ENCODE measurements at regions of chr1 and their contacts with region 1.

Region 1: DNA sequence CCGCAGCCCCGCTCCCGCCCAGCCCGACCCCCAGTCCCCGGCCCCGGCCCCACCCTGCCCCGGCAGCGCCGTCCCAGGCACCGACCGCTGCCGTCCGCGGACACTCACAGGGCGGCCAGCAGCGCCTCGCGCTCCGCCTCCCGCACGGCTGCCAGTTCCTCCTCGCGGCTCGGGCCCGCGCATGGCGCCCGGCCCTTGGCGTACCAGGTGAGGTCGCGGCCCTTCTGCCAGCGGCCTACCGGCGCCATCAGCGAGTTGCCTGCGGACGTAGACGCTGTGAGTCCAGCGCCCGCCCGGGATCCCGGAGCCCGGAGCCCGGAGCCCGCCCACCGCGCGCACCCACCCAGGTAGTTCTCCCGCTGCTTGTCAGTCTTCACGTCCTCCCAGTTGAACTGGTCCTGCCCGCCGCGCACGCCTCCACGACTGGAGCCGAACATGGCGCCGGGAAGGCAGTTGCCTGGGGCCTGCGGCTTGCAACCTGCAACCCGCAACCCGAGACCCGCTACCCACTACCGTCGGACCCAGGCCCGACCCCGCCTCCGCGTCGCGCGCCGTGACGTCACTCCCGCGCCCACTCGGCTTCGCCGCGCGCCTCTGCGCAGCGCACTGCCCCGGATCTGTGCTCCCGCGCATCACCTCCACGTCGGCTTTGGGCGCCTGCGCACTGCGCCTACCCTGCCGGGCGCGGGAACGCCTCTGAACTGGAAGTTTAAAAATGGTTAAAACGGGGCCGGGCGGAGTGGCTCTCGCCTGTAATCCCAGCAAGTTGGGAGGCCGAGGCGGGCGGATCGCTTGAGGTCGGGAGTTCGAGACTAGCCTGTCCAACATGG is at the start of gene C1orf35:
- DNase-seq: peak; percentile 90 to 97 (median 93)
- ATAC-seq: peak; percentile 85
- H3K4me3 ChIP-seq: peak within 1 kb of the TSS; percentile 95
- H3K4me3 Mint-ChIP-seq: peak within 1 kb of the TSS; percentile 91 to 97 (median 93)
- H3K27ac ChIP-seq: peak within 1 kb of the TSS; percentile 94
- H3K27ac Mint-ChIP-seq: peak within 1 kb of the TSS; percentile 90 to 95 (median 94)
- H3K4me1 ChIP-seq: peaks cover 17 to 20% of the 10 kb centered on the region in 2 donors
- H3K4me1 Mint-ChIP-seq: peaks cover 6 to 43% (median 23%) of the 10 kb centered on the region in 7 donors
- H3K27me3 ChIP-seq: no peaks in the 10 kb centered on the region
- H3K27me3 Mint-ChIP-seq: no peaks in the 10 kb centered on the region
- total RNA-seq, gene C1orf35: 16.8 to 31.8 (median 27.8) TPM

Region 2: GRCh38 chr1:228090613-228091081 is 12.4 kb before region 1 on chr1:
- CTCF ChIA-PET with region 1: interaction called, 4 read pairs
- POLR2A ChIA-PET with region 1: interaction called, 10 read pairs
- intact Hi-C with region 1: no loop called
- DNase-seq: no peak
- ATAC-seq: no peak
- H3K4me3 ChIP-seq: peak overlapping the region; percentile 3
- H3K4me3 Mint-ChIP-seq: peak overlapping the region in 9 of 10 donors; percentile 29 to 97 (median 65)
- H3K27ac ChIP-seq: peak overlapping the region; percentile 50
- H3K27ac Mint-ChIP-seq: peak overlapping the region in 7 of 9 donors; percentile 13 to 91 (median 75)
- H3K4me1 ChIP-seq: peaks cover 65 to 71% of the 10 kb centered on the region in 2 donors
- H3K4me1 Mint-ChIP-seq: peaks cover 63 to 89% (median 84%) of the 10 kb centered on the region in 7 donors
- H3K27me3 ChIP-seq: no peaks in the 10 kb centered on the region
- H3K27me3 Mint-ChIP-seq: no peaks in the 10 kb centered on the region

Region 3: DNA sequence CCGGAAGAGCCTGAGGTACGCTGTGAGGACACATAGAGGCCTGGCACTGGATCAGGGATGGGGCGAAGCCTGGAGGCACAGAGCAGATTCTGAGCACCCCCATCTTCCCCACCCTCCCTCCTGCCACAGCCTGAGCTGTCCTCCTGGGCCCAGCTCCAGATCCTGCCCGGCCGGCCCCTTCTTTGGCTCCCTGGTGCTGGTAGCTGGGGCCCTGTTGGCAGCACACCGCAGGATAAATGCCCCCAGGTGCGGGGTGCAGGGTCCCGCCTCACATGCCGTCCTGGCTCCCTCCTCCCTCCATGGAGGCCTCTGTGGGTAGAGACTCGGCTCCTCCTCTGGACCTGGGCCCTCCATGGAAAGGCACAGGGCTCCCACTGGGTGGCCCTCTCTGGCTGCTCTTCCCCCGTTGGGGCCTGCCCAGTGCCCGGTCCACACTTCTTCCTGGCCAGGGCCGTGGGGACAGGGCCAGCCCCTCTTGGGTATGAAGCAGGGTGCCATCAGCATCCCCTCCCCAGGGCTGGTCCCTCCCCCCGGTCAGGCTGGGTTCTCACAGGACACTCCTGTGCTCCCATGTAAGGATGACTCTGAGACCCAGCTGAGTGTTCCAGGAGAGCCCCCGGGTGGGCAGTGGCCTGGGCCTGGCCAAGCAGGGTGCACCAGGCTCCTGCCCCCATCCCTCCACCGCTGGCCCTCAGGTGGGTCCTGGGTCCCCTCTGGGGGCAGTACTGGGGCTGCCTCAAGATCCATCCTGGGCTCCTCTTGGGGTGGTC is 103.8 kb after region 1 on chr1:
- CTCF ChIA-PET with region 1: no interaction called
- POLR2A ChIA-PET with region 1: no interaction called
- intact Hi-C with region 1: no loop called
- DNase-seq: no peak
- ATAC-seq: peak; percentile 19
- H3K4me3 ChIP-seq: no peak overlapping the region
- H3K4me3 Mint-ChIP-seq: no peak overlapping the region
- H3K27ac ChIP-seq: no peak overlapping the region
- H3K27ac Mint-ChIP-seq: no peak overlapping the region
- H3K4me1 ChIP-seq: no peaks in the 10 kb centered on the region
- H3K4me1 Mint-ChIP-seq: no peaks in the 10 kb centered on the region
- H3K27me3 ChIP-seq: no peaks in the 10 kb centered on the region
- H3K27me3 Mint-ChIP-seq: peaks cover 4 to 24% (median 10%) of the 10 kb centered on the region in 5 donors

Measured in naive thymus-derived CD4-positive, alpha-beta T cell (primary cell).